ENCODE measurements at regions of chr9 and their contacts with region 1.

Region 1: DNA sequence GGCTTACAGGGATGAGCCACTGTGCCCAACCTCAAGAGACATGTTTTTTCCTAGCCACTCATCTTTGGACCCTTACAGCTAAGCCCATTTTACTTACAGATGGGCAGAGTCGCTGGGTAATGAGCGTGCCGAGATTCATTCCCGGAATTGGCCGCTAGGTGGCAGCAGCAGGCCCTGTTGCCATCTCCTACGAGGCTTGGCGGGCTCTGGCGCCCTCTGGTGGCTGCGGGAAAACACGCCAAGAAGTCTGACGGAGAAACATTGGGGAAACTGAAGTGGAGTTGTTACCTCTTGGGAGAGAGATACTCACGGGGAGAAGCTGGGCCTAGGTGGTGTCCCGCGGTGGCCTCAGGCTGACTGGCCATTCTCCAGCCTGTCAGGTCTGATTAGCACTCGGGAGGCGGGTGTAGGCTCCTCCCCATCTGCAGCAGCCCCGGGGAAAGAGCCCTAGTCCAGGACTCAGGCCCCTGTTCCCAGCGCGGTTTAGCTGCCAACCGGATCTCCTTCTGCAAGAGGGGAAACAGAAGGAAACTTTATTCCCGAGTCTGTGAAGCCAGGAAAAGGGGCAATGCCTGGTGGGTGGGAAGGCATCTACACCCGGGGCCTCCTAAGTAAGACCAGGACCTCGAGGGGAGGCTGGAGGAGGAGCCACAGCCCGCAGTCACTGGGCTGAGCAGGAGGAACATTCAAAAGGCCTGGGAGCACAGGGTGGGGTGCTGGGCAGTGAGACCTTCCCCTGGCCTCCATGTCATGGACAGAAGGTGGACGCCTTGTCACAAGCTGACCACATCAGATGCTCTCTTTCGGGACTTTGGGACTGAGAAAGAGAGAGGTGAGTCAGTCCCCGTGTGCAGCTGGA is 9.7 kb downstream of the PTGES2 start:
- H3K4me3 ChIP-seq: no peak overlapping the region
- H3K27ac ChIP-seq: no peak overlapping the region
- H3K4me1 ChIP-seq: no peaks in the 10 kb centered on the region
- CTCF ChIP-seq: peak; percentile 97

Region 2: DNA sequence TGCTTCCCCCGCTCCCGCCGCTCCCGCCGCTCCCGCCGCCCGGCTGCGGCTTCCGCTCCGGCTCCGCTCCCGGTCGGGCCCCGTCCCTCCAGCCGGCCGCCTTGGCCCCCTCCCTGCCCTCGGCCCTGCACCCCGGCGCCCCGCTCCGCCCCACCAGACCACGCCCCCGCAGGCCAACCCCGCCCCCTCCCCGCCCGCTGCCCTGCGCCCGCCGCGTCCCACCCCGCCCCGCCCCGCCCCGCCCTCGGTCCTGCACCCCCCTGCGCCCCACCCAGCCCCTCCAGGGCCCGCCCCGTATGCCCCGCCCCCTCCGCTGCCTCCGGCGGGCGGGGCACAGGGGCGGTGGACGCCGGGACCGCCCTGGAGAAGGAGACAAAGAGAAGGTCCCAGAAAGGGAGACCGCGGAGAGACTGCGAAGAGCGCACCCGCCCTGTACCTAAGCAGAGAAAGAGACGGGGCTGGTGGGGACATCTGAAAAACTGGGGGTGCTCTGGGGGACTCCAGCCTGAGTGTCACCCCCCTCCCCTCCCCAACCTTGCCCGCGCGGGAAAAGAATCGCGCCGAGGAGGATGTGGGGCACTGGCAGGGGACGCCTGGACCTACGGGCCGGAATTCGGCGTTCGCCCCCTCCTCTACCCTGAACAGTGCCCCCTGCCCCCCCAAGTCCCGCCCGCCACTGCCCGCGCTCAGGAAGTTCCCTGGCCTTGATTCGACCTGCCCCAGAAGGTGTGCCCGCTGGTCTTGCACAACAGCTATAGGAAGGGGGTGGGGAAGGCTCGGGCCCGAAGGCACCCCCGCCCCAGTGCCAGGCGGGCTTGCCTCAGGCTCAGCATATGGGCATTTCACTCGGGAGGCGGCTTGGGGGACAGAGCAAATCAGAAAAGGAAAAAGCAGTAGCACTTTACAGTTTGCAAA is 548.6 kb before region 1 on chr9:
- CTCF ChIA-PET with region 1: no interaction called
- POLR2A ChIA-PET with region 1: no interaction called
- H3K4me3 ChIP-seq: peak overlapping the region; percentile 54
- H3K27ac ChIP-seq: peak overlapping the region; percentile 68; the same call in 1 of the 2 replicates
- H3K4me1 ChIP-seq: peaks cover 9% of the 10 kb centered on the region; the same call in 1 of the 2 replicates
- CTCF ChIP-seq: no peak

Region 3: DNA sequence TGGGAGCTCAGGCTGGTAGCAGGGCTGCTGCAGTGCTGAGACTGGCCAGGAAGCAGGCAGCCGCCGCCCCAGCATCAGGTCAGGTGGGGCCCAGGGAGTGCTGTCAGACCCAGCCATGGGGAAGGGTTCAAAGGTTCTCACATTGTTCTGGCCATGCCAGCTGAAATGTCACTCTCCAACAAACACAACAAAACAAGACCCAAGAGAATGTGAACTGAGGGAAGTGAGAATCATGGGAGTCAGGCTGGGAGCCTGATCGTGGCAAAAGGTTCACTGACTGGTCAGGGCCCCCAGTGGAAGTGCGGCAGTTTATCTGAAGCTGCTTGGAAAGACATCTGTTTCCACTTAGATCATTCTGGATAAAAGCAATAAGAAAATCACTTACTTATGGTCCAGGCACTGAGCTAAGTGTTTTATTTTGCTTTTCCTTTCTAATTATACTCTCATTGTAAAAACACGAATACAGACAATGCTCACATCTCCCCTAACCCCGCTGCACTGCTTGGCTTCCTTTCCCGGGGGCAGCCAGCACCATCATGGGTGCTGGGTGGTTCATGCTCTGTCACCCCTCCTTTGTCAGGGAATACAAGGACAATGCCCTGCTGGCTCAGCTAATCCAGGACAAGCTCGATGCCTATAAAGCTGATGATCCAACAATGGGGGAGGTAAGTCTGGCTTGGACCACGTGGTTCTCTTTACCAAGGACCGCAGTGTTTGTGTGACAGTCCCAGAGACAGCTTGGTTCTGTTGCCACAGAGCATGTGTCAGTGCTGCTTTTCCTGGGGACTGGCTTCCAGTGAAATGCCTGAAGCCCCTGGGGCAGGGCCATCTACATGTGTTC is 453.0 kb before region 1 on chr9:
- CTCF ChIA-PET with region 1: no interaction called
- POLR2A ChIA-PET with region 1: no interaction called
- H3K4me3 ChIP-seq: no peak overlapping the region
- H3K27ac ChIP-seq: no peak overlapping the region
- H3K4me1 ChIP-seq: no peaks in the 10 kb centered on the region
- CTCF ChIP-seq: no peak

Region 4: DNA sequence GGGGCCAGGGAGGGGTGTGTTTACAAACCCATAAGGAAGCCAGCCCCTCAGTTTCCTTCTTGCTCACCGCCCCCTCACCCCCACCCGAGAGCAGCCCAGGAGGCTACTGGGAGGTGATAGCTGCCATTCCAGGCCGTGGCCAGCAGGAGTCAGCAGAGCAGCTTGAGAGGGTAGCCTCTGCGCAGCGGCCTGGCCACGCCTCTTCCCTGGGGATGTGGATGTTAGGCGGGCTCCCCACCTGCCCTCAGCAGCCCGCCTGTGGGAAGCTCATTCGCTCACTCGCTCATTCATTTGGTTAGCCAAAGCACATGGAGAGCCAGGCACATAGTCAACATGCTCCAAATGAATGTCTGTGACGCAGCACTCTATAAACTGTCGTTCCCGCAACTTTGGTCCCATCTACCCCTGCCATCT is 174.1 kb before region 1 on chr9:
- CTCF ChIA-PET with region 1: interaction called, 50 read pairs
- POLR2A ChIA-PET with region 1: no interaction called
- H3K4me3 ChIP-seq: no peak overlapping the region
- H3K27ac ChIP-seq: no peak overlapping the region
- H3K4me1 ChIP-seq: peaks cover 3% of the 10 kb centered on the region; the same call in 1 of the 2 replicates
- CTCF ChIP-seq: peak; percentile 70; the same call in 1 of the 2 replicates

Region 5: DNA sequence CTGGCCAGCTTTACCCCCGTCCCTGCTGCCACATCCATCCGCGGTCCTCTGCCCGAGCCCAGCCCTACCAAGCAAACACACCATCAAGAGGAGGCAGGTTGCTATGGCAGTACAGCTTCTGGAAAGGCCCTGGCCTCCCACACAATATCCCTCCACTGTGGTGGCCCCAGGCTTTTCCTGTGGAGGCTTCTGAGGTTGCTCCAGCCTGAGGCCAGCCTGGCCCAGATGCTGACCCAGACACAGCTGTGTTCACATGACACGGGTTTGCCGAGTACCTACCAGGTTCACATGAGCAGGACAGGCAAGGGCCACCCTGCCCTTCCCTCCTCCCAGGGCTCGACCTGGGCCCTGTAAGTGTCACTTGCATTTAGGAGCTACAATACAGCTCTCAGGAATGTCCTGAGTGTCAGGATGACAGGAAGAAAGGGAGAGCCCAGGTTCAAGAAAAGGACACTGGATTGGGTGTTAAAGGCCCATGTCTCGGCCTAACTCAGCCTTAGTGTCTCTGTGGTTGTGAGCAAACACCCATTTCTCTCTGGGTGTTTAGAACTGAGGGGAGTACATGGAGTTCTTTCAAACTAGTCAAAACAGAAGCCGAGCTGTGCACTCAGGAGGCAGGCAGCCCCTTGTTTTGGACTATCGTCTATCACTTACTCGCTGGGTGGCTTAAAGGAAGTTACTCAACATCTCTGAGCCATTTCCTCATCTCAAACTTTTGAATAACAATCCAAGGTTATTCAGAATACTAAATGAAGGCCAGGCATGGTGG is 90.9 kb before region 1 on chr9:
- CTCF ChIA-PET with region 1: interaction called, 12 read pairs
- POLR2A ChIA-PET with region 1: no interaction called
- H3K4me3 ChIP-seq: no peak overlapping the region
- H3K27ac ChIP-seq: no peak overlapping the region
- H3K4me1 ChIP-seq: no peaks in the 10 kb centered on the region
- CTCF ChIP-seq: no peak

Region 6: DNA sequence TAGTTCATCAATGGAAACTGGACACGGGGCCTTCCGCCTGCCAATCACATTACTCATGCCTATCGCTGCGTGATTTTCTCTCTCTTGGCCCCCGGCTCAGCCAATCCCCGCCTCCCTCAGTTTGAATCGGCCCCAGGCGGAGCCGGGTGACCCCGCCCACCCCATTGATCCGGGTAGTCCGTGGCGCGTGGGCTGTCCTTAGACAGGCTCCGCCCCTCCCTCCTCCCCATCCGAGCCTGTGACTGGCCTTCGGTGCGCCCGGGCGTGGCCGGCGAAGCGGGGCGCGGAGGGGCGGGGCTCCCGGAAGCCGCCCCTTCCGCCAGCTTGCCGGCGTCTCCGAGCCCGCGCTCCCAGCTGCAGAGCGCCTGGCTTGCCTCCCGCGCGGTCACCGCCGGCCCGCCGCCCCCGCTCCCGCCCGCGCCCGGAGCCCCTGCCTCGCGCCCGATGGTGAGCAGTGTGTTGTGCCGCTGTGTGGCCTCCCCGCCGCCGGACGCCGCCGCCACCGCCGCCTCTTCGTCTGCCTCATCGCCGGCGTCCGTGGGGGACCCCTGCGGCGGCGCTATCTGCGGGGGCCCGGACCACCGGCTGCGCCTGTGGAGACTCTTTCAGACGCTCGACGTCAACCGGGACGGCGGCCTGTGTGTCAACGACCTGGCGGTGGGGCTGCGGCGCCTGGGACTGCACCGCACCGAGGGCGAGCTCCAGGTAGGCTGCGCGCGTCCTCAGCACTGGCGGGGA is 49.8 kb before region 1 on chr9 and contains the start of gene SLC25A25:
- CTCF ChIA-PET with region 1: interaction called, 16 read pairs
- POLR2A ChIA-PET with region 1: no interaction called
- H3K4me3 ChIP-seq: peak within 1 kb of the TSS; percentile 80
- H3K27ac ChIP-seq: peak within 1 kb of the TSS; percentile 77
- H3K4me1 ChIP-seq: peaks cover 2% of the 10 kb centered on the region; the same call in 1 of the 2 replicates
- CTCF ChIP-seq: peak; percentile 28; the same call in 1 of the 2 replicates

Region 7: GRCh38 chr9:128089299-128089698 is 28.5 kb before region 1 on chr9:
- CTCF ChIA-PET with region 1: interaction called, 22 read pairs
- POLR2A ChIA-PET with region 1: interaction called, 3 read pairs
- H3K4me3 ChIP-seq: no peak overlapping the region
- H3K27ac ChIP-seq: no peak overlapping the region
- H3K4me1 ChIP-seq: 0 out of 2 replicates have a peak, but pooled peaks cover 4% of the 10 kb centered on the region
- CTCF ChIP-seq: no peak

Region 8: DNA sequence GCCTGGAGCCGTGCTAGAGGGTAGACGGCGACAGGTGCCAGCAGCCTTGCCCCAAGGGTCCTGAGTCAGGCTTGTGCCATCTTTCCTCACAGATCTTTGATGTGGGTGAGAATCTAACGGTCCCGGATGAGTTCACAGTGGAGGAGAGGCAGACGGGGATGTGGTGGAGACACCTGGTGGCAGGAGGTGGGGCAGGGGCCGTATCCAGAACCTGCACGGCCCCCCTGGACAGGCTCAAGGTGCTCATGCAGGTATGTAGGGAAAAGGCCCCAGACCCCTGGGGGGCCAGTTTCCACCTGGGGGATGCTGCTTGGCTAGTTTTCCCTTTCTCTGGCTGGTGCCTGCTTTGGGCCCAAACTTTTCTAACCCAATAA is 14.3 kb before region 1 on chr9:
- CTCF ChIA-PET with region 1: interaction called, 88 read pairs
- POLR2A ChIA-PET with region 1: interaction called, 3 read pairs
- H3K4me3 ChIP-seq: no peak overlapping the region
- H3K27ac ChIP-seq: no peak overlapping the region
- H3K4me1 ChIP-seq: no peaks in the 10 kb centered on the region
- CTCF ChIP-seq: 0 out of 2 replicates have a peak, but pooled peaks have one; percentile 33

Region 9: DNA sequence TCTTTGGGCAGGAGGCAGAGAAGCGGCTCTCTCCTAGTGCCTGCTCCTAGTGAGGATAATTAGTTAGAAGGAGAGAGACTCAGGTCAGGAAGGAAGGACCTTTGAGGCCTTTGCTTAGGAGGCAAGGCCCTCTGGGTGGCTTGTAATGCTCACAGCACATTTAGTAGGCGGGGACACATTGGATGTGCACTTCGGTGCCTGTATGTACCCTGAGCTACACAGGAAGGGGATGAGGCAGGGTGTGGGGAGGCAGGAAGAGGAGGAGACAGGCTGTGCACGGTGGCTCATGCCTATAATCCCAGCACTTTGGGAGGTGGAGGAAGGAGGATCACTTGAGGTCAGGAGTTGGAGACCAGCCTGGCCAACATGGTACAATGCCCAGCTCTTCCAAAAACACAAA is 24.2 kb after region 1 on chr9:
- CTCF ChIA-PET with region 1: interaction called, 14 read pairs
- POLR2A ChIA-PET with region 1: no interaction called
- H3K4me3 ChIP-seq: no peak overlapping the region
- H3K27ac ChIP-seq: no peak overlapping the region
- H3K4me1 ChIP-seq: no peaks in the 10 kb centered on the region
- CTCF ChIP-seq: no peak